HAP-1 (cell line): ENCODE measurements at regions of chr17 and their contacts with region 1.

Region 1: GRCh38 chr17:17496189-17497064 is at the start of gene RASD1:
- DNase-seq: peak; percentile 81 to 87
- H3K4me3 ChIP-seq: peak within 1 kb of the TSS; percentile 54
- H3K4me1 ChIP-seq: peaks cover 11% of the 10 kb centered on the region
- H3K27me3 ChIP-seq: no peaks in the 10 kb centered on the region

Region 2: GRCh38 chr17:17356149-17356930 is 140.1 kb before region 1 on chr17:
- in situ Hi-C with region 1: loop called (anchors 5 kb)
- DNase-seq: peak; percentile 66 to 86
- H3K4me3 ChIP-seq: no peak overlapping the region
- H3K4me1 ChIP-seq: no peaks in the 10 kb centered on the region; the same call in 1 of the 2 replicates
- H3K27me3 ChIP-seq: no peaks in the 10 kb centered on the region; the same call in 1 of the 2 replicates

Region 3: GRCh38 chr17:17568749-17569195 is 72.3 kb after region 1 on chr17:
- in situ Hi-C with region 1: loop called (anchors 5 kb)
- DNase-seq: peak; percentile 35 to 91
- H3K4me3 ChIP-seq: no peak overlapping the region
- H3K4me1 ChIP-seq: no peaks in the 10 kb centered on the region
- H3K27me3 ChIP-seq: no peaks in the 10 kb centered on the region

Region 4: GRCh38 chr17:17605729-17606088 is 109.3 kb after region 1 on chr17:
- in situ Hi-C with region 1: no loop called
- DNase-seq: no peak
- H3K4me3 ChIP-seq: no peak overlapping the region
- H3K4me1 ChIP-seq: peaks cover 22% of the 10 kb centered on the region
- H3K27me3 ChIP-seq: no peaks in the 10 kb centered on the region

Region 5: DNA sequence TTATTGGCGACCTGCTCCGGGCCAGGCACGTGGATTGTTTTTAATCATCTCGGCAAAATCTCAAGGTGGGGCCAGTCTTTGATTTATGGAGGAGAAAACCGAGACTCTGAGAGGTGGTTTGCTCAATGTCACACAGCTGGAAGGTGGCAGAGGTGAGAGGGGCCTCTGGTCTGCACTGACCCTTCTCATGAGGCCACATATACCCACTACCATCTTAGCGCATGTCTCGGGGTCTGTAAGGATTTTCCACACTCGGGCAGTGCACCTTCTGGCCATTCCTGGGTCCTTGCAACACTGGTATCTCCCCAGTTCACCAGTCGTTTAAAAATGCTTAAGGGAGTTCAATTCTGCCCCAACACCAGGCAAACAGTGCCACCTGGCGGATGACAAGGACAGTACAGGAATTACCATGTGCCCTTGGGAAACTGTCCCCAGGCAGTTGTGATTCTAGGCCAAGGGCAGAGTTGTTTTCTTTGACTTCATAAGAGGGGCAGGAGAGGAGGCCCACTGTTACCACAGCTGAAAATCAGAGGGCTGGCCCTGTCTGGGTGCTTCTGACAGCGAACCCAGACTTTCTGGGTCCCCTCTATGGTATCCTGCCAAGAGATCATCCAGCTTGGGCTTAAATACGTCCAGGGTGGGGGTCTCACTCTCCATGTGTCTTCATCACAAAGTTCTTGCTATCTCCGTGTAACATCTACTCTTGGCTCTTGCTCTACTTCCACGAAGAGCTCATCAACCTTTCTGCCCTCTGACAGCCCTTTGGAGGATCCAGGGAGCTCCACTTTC is 145.4 kb after region 1 on chr17:
- in situ Hi-C with region 1: loop called (anchors 5 kb)
- DNase-seq: peak; percentile 84 to 86
- H3K4me3 ChIP-seq: no peak overlapping the region
- H3K4me1 ChIP-seq: peaks cover 6% of the 10 kb centered on the region
- H3K27me3 ChIP-seq: no peaks in the 10 kb centered on the region